ENCODE measurements at regions of chr2 and their contacts with region 1.

Region 1: GRCh38 chr2:200703127-200703925 is 108.4 kb upstream of the BZW1 start:
- DNase-seq: peak; percentile 15 to 74
- ATAC-seq: peak; percentile 40 to 84; a peak in 4 of 6 replicates
- H3K4me3 ChIP-seq: no peak overlapping the region
- H3K27ac ChIP-seq: peak overlapping the region; percentile 17 to 57; a peak in 4 of 6 replicates
- H3K4me1 ChIP-seq: peaks cover 6% of the 10 kb centered on the region
- CTCF ChIP-seq: peak; percentile 92
- EP300 ChIP-seq: no peak
- POLR2A ChIP-seq: no peak
- RAD21 ChIP-seq: peak; percentile 91 to 96

Region 2: DNA sequence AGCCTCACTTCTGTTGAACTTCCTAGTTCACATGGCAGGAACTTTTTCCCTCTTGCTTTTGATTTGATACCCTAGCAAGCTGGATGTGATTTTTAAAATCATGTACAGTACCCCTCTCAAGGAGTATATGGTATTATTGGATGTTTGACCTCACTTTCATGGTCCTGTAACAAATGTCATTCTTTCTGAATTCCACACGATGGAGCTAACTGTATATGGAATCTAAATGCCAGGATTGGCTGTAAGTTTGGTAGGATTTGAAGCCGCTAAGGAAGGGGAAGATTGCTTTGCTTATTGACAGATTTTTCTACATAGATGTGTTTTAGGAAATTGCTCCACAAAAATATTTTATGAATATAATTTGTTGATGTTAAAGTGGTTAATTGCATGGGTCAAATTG is 729.6 kb before region 1 on chr2:
- CTCF ChIA-PET with region 1: interaction called, 25 read pairs
- POLR2A ChIA-PET with region 1: no interaction called
- DNase-seq: peak; percentile 15 to 46
- ATAC-seq: peak; percentile 70 to 81; a peak in 5 of 6 replicates
- H3K4me3 ChIP-seq: no peak overlapping the region
- H3K27ac ChIP-seq: peak overlapping the region in 1 of 2 experiments; percentile 80; a peak in 3 of 6 replicates
- H3K4me1 ChIP-seq: peaks cover 28% of the 10 kb centered on the region
- CTCF ChIP-seq: peak; percentile 82
- EP300 ChIP-seq: no peak
- POLR2A ChIP-seq: no peak
- RAD21 ChIP-seq: peak; percentile 84 to 87

Region 3: DNA sequence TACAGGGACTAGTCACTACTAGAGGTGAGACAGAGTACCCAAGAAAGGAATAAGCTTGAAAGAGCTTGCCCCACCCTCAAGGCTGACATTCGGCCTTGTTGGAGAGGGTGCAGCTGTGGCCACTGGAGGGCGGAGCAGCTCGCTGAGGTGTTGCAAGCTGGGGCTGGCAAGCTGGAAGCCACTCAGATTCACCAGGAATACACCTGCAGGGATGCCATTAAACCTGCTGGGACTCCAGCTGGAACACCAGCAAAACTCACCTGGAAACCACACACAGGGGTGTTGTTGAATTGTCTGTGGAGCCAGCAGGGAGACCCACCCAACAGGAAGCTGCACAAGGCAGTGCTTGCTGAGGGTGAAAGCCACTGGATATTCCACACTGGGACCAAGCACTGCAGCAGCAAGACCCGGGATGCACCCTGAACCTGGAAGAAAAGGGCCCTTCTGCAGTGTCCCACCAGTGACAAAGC is 219.6 kb before region 1 on chr2:
- CTCF ChIA-PET with region 1: interaction called, 85 read pairs
- POLR2A ChIA-PET with region 1: interaction called, 3 read pairs
- DNase-seq: peak; percentile 29 to 71
- ATAC-seq: peak; percentile 79
- H3K4me3 ChIP-seq: no peak overlapping the region
- H3K27ac ChIP-seq: peak overlapping the region in 1 of 2 experiments; percentile 70; a peak in 3 of 6 replicates
- H3K4me1 ChIP-seq: peaks cover 61% of the 10 kb centered on the region
- CTCF ChIP-seq: peak; percentile 67
- EP300 ChIP-seq: no peak
- POLR2A ChIP-seq: no peak
- RAD21 ChIP-seq: peak; percentile 64 to 67

Region 4: DNA sequence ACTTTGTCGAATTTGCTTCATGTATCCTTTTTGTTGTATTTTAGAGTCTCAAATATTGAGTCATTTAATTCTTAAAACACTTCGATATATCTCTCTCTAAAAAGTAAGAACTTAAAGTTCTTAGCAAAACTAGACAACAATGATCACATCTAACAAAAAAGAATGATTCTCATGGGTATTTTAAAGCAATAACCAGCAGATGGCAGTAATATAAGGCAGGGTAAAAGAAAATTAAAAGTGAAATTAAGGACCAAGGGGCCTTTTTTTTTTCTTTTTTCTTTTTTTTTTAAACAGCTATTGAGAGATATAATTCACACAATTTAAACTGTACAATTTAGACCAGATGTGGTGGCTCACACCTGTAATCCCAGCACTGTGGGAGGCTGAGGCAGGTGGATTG is 127.4 kb before region 1 on chr2:
- CTCF ChIA-PET with region 1: interaction called, 14 read pairs
- POLR2A ChIA-PET with region 1: no interaction called
- DNase-seq: no peak
- ATAC-seq: no peak
- H3K4me3 ChIP-seq: no peak overlapping the region
- H3K27ac ChIP-seq: no peak overlapping the region
- H3K4me1 ChIP-seq: no peaks in the 10 kb centered on the region
- CTCF ChIP-seq: peak; percentile 49
- EP300 ChIP-seq: no peak
- POLR2A ChIP-seq: no peak
- RAD21 ChIP-seq: peak; percentile 46 to 56

Region 5: GRCh38 chr2:200615247-200615646 is 88.1 kb before region 1 on chr2:
- CTCF ChIA-PET with region 1: interaction called, 22 read pairs
- POLR2A ChIA-PET with region 1: interaction called, 3 read pairs
- DNase-seq: peak; percentile 32 to 62
- ATAC-seq: peak; percentile 89
- H3K4me3 ChIP-seq: no peak overlapping the region
- H3K27ac ChIP-seq: peak overlapping the region; percentile 70 to 79
- H3K4me1 ChIP-seq: peaks cover 61% of the 10 kb centered on the region
- CTCF ChIP-seq: no peak
- EP300 ChIP-seq: no peak
- POLR2A ChIP-seq: no peak
- RAD21 ChIP-seq: no peak

Region 6: GRCh38 chr2:200752332-200752731 is 49.0 kb after region 1 on chr2:
- CTCF ChIA-PET with region 1: no interaction called
- POLR2A ChIA-PET with region 1: no interaction called
- DNase-seq: no peak
- ATAC-seq: no peak
- H3K4me3 ChIP-seq: no peak overlapping the region
- H3K27ac ChIP-seq: peak overlapping the region in 1 of 2 experiments; percentile 40; a peak in 4 of 6 replicates
- H3K4me1 ChIP-seq: peaks cover 67% of the 10 kb centered on the region
- CTCF ChIP-seq: no peak
- EP300 ChIP-seq: no peak
- POLR2A ChIP-seq: no peak
- RAD21 ChIP-seq: no peak

Region 7: DNA sequence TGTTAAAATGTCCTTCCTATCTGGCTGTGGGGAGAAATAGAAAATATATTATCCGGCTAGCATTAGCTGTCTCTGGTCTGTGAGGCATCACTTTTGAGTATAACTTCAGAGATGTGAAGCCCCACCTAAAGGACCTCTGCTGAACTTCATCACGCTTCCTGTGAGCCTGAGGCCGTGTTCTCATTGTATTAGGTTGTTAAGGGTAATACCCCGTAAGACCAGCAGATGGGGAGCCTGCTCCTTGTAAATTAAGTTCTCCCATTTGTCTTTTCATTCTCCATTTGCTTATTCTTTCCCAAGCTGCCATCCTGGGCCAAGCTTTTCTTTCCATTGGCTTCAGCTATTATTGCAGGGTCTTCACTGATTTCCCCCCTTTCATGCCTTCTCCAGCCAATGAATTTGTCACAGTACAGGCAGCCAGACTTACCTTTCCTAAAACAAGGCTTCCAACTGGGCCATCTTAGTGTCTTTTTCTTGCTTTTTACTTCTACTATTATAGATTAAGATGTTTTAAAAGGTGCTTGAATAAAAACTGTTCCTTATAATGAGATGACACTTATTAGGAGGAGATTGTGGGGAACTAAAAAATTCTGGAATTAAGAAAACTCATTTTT is 198.2 kb after region 1 on chr2:
- CTCF ChIA-PET with region 1: no interaction called
- POLR2A ChIA-PET with region 1: no interaction called
- DNase-seq: peak; percentile 90 to 94
- ATAC-seq: peak; percentile 95 to 98
- H3K4me3 ChIP-seq: no peak overlapping the region
- H3K27ac ChIP-seq: no peak overlapping the region
- H3K4me1 ChIP-seq: peaks cover 12% of the 10 kb centered on the region; the same call in 1 of the 3 replicates
- CTCF ChIP-seq: peak; percentile 87
- EP300 ChIP-seq: no peak
- POLR2A ChIP-seq: no peak
- RAD21 ChIP-seq: peak; percentile 85 to 88

Region 8: DNA sequence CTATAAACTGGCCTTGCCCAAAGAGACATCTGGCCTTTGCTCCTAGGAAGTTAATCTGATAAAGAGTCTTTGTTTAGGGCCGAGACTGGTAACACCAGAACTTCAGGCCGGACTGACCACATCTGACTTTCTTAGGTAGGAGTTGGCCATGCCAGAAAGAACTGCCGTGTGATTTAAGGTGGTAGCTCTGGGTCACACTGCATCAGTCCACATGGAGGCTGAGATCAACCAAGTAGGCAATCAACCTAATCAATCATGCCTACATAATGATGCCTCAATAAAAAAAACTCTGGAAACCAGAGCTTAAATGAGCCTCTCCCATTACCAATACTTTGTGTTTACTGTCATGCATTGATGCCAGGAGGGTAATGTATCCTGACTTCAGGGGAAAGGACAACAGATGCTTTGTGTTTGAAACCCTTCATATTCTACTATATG is 304.3 kb after region 1 on chr2:
- CTCF ChIA-PET with region 1: no interaction called
- POLR2A ChIA-PET with region 1: no interaction called
- DNase-seq: no peak
- ATAC-seq: peak in 1 of 2 experiments; percentile 52; a peak in 3 of 6 replicates
- H3K4me3 ChIP-seq: no peak overlapping the region
- H3K27ac ChIP-seq: no peak overlapping the region
- H3K4me1 ChIP-seq: peaks cover 27% of the 10 kb centered on the region
- CTCF ChIP-seq: no peak
- EP300 ChIP-seq: no peak
- POLR2A ChIP-seq: no peak
- RAD21 ChIP-seq: no peak

Region 9: GRCh38 chr2:201420442-201421113 is 717.3 kb after region 1 on chr2:
- CTCF ChIA-PET with region 1: no interaction called
- POLR2A ChIA-PET with region 1: no interaction called
- DNase-seq: no peak
- ATAC-seq: no peak
- H3K4me3 ChIP-seq: no peak overlapping the region
- H3K27ac ChIP-seq: no peak overlapping the region
- H3K4me1 ChIP-seq: peaks cover 7% of the 10 kb centered on the region; the same call in 2 of the 3 replicates
- CTCF ChIP-seq: no peak
- EP300 ChIP-seq: no peak
- POLR2A ChIP-seq: no peak
- RAD21 ChIP-seq: no peak

Measured in A549 (cell line).